CD14-positive monocyte (primary cell): ENCODE measurements at regions of chr1 and their contacts with region 1.

Region 1: DNA sequence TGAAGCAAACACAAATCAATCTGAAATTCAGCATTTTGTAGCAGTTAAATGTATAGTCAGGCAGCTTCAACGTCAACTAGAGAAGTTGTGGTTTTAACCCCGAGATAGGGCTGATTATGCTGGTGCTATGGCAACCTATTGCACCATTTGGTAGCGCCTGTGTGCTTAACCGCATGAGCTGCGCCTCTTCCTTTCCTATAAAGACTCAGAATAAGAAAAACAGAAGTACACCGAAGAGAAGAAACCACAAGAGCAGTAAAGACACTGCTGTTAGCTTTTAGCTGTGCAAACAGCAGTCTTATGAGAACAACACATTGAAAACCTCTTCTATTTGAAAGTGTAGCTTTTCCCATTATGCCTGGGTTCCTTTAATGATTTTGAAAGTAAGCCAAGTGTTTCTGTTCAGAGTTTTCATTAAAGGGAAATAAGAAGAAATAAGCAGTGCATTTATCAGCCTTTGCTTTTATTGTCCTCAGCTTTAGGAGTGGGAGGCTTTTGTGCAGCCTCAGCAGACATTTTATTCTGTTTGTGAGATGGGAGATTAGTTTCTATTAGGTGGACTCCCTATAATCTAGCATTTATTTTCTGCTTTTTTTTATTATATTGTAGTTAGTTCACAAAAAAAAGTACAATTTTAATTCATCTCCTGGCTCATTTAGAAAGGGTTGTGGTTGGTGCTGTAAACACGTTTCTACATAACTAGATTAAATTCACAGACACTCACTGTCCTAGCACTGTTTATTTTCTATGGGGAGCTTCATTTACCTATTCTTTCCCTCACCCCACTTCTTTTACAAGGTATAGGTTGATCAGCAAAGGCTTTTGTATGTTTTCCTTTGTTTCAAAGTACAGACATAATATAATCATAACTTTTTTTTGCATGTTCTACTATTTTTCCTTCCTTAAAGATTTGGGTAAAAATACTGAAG is 43.3 kb downstream of the PTPRC start:
- DNase-seq: peak; percentile 97 to 100 (median 98)
- H3K4me3 ChIP-seq: peak overlapping the region; percentile 9 to 64 (median 28)
- H3K4me3 Mint-ChIP-seq: peak overlapping the region; percentile 27 to 76
- H3K27ac ChIP-seq: peak overlapping the region; percentile 65 to 92
- H3K27ac Mint-ChIP-seq: peak overlapping the region; percentile 93 to 99 (median 97)
- H3K4me1 ChIP-seq: peaks cover 80 to 95% of the 10 kb centered on the region in 2 donors
- H3K4me1 Mint-ChIP-seq: peaks cover 83% of the 10 kb centered on the region
- H3K27me3 ChIP-seq: no peaks in the 10 kb centered on the region
- H3K27me3 Mint-ChIP-seq: no peaks in the 10 kb centered on the region
- CTCF ChIP-seq: no peak

Region 2: DNA sequence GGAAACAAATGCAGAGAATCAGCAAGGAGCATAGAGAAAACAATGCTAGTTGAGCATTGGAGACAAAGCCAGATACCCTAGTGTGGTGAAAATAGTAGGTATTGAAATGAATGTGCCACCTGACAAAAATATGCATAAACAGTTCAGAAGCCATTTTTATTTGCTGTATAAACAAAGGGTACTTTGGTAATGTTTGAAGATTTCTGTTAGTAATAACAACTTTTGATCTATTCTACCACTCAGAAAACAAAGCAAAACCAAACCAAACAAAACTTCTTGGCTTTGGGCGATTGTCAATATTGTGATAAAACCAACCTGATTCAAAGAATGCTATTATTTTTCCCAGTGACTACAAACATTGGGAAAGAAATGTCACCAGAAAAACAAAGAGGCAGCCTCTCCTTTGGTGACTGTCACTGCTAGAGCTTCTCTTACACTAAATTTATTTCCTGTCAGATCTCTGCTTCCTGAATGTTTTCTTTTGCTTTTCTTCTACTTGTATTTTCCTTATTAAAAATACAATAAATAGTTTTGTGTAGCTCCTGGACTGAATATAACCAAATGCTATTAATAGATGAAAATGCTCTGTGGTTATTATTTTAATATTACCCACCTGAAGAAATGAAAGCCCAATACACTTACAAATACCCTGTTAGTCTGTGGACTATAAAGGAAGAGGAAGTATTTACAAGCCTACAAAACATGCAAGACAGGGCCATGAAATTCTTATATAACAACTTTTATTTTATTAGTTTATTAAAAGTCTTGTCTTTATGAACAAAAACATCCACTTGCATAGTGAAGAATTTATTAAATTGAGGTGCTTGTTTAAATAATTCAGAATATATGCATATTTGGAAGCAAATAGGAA is 147.3 kb before region 1 on chr1:
- intact Hi-C with region 1: loop called in 1 of 2 experiments (anchors 10 kb)
- DNase-seq: peak in 1 of 3 donors; percentile 17
- H3K4me3 ChIP-seq: peak overlapping the region in 1 of 3 experiments; percentile 42
- H3K4me3 Mint-ChIP-seq: peak overlapping the region in 1 of 2 donors; percentile 64
- H3K27ac ChIP-seq: peak overlapping the region in 1 of 2 donors; percentile 43
- H3K27ac Mint-ChIP-seq: peak overlapping the region in 3 of 7 donors; percentile 20 to 65 (median 50)
- H3K4me1 ChIP-seq: peaks cover 6 to 12% of the 10 kb centered on the region in 2 donors
- H3K4me1 Mint-ChIP-seq: peaks cover 17% of the 10 kb centered on the region
- H3K27me3 ChIP-seq: no peaks in the 10 kb centered on the region
- H3K27me3 Mint-ChIP-seq: peaks cover 0 to 4% (median 0%) of the 10 kb centered on the region in 3 donors
- CTCF ChIP-seq: no peak

Region 3: DNA sequence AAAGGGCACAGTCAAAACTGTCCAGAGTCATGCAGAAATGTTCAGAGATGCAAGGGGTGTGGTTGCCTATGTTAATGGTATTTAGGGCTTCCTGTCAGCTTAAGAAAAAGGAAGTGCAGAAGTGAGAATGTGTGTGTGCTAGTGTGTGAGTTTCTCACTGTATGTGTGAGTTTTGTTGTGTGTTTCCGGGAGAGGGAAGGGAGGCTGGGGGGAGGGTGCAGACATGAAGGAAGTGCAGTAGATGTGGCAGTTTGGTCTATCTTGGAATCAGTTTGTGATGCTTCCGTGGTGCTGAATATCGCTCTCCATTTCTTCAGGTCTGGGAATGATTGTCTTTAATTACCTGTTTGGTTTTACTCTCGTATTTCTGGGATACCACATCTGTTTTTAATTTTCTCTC is 125.1 kb before region 1 on chr1:
- intact Hi-C with region 1: loop called in 1 of 2 experiments (anchors 10 kb)
- DNase-seq: peak; percentile 77 to 81 (median 78)
- H3K4me3 ChIP-seq: peak overlapping the region in 1 of 3 experiments; percentile 27
- H3K4me3 Mint-ChIP-seq: peak overlapping the region in 1 of 2 donors; percentile 61
- H3K27ac ChIP-seq: peak overlapping the region in 1 of 2 donors; percentile 35
- H3K27ac Mint-ChIP-seq: peak overlapping the region; percentile 8 to 70 (median 45)
- H3K4me1 ChIP-seq: peaks cover 30 to 33% of the 10 kb centered on the region in 2 donors
- H3K4me1 Mint-ChIP-seq: peaks cover 44% of the 10 kb centered on the region
- H3K27me3 ChIP-seq: no peaks in the 10 kb centered on the region
- H3K27me3 Mint-ChIP-seq: no peaks in the 10 kb centered on the region
- CTCF ChIP-seq: no peak

Region 4: DNA sequence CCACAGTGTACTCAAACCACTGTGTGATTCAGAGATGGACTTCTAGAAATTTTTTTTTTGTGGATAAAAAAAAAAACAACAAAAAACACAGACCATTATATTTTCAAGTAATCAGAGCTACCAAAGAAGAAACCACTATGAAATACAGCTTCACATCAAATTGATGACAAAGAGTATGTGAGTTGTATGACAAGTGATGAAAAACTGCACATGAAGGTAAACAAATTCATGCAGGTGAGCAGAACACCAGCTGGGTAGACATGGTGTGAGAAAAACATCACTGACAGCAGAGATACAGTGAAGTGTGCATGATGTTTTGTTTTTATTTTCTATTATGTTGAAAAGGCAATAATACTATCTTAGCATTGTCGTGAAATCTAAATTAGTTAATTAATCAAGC is 51.2 kb before region 1 on chr1:
- intact Hi-C with region 1: no loop called
- DNase-seq: no peak
- H3K4me3 ChIP-seq: no peak overlapping the region
- H3K4me3 Mint-ChIP-seq: no peak overlapping the region
- H3K27ac ChIP-seq: no peak overlapping the region
- H3K27ac Mint-ChIP-seq: no peak overlapping the region
- H3K4me1 ChIP-seq: peaks cover 15 to 29% of the 10 kb centered on the region in 2 donors
- H3K4me1 Mint-ChIP-seq: peaks cover 30% of the 10 kb centered on the region
- H3K27me3 ChIP-seq: no peaks in the 10 kb centered on the region
- H3K27me3 Mint-ChIP-seq: peaks cover 0 to 1% (median 0%) of the 10 kb centered on the region in 3 donors
- CTCF ChIP-seq: no peak

Region 5: GRCh38 chr1:198641501-198641900 is 40.6 kb before region 1 on chr1:
- intact Hi-C with region 1: loop called (anchors 5 kb)
- DNase-seq: peak; percentile 51 to 68 (median 66)
- H3K4me3 ChIP-seq: peak overlapping the region; percentile 93 to 100 (median 96)
- H3K4me3 Mint-ChIP-seq: peak overlapping the region; percentile 82 to 92
- H3K27ac ChIP-seq: peak overlapping the region; percentile 36 to 90
- H3K27ac Mint-ChIP-seq: peak overlapping the region; percentile 47 to 97 (median 93)
- H3K4me1 ChIP-seq: peaks cover 37 to 63% of the 10 kb centered on the region in 2 donors
- H3K4me1 Mint-ChIP-seq: peaks cover 56% of the 10 kb centered on the region
- H3K27me3 ChIP-seq: no peaks in the 10 kb centered on the region
- H3K27me3 Mint-ChIP-seq: no peaks in the 10 kb centered on the region
- CTCF ChIP-seq: no peak

Region 6: GRCh38 chr1:198657550-198658064 is 24.5 kb before region 1 on chr1:
- intact Hi-C with region 1: no loop called
- DNase-seq: peak; percentile 81 to 93 (median 93)
- H3K4me3 ChIP-seq: peak overlapping the region; percentile 11 to 64 (median 32)
- H3K4me3 Mint-ChIP-seq: peak overlapping the region; percentile 45 to 73
- H3K27ac ChIP-seq: peak overlapping the region; percentile 72 to 94
- H3K27ac Mint-ChIP-seq: peak overlapping the region; percentile 97 to 99 (median 98)
- H3K4me1 ChIP-seq: peaks cover 58 to 89% of the 10 kb centered on the region in 2 donors
- H3K4me1 Mint-ChIP-seq: peaks cover 59% of the 10 kb centered on the region
- H3K27me3 ChIP-seq: no peaks in the 10 kb centered on the region
- H3K27me3 Mint-ChIP-seq: peaks cover 0 to 2% (median 0%) of the 10 kb centered on the region in 3 donors
- CTCF ChIP-seq: no peak

Region 7: DNA sequence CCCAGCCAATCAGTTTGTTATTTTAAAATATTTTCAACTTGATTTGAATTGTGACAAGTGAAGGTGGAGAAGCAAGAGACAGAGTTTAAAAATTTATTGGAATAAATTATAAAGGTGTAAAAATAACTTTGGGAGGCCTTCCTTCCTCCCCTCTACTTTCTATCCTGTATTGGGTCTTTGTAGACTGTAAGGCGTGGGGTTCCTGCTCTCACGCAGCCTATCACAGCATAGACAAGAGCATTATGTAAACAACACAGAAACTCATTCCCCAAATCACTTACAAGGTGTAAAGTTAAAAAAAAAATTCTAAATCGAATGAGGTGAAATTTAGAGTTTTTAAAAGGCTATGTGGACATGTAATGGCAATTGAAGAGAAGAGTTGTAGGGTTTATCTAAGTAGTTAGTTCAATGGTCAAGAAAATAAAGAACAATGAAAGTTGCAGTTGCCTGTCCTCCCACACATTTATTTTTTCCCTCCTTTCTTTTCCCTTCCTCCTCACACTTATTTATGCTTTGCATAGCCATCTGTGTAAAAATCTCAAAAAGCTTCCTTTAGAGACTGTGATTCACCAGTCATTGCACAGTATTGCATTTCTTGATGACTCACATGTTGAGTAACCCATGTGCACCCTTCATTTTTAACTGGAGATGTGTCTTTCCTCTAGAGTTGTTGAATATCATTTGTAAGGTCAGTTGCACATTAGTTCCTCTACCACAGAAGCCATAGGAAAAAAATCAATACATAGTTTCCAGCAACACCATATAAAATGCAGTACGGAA is 198.9 kb after region 1 on chr1:
- intact Hi-C with region 1: no loop called
- DNase-seq: peak; percentile 86 to 96 (median 92)
- H3K4me3 ChIP-seq: peak overlapping the region in 1 of 3 experiments; percentile 9
- H3K4me3 Mint-ChIP-seq: peak overlapping the region in 1 of 2 donors; percentile 53
- H3K27ac ChIP-seq: peak overlapping the region; percentile 59 to 72
- H3K27ac Mint-ChIP-seq: peak overlapping the region; percentile 77 to 91 (median 87)
- H3K4me1 ChIP-seq: peaks cover 10 to 18% of the 10 kb centered on the region in 2 donors
- H3K4me1 Mint-ChIP-seq: peaks cover 16% of the 10 kb centered on the region
- H3K27me3 ChIP-seq: no peaks in the 10 kb centered on the region
- H3K27me3 Mint-ChIP-seq: no peaks in the 10 kb centered on the region
- CTCF ChIP-seq: no peak